Psoas muscle (tissue), 8 donors: ENCODE measurements at regions of chr6 and their contacts with region 1.

Region 1: DNA sequence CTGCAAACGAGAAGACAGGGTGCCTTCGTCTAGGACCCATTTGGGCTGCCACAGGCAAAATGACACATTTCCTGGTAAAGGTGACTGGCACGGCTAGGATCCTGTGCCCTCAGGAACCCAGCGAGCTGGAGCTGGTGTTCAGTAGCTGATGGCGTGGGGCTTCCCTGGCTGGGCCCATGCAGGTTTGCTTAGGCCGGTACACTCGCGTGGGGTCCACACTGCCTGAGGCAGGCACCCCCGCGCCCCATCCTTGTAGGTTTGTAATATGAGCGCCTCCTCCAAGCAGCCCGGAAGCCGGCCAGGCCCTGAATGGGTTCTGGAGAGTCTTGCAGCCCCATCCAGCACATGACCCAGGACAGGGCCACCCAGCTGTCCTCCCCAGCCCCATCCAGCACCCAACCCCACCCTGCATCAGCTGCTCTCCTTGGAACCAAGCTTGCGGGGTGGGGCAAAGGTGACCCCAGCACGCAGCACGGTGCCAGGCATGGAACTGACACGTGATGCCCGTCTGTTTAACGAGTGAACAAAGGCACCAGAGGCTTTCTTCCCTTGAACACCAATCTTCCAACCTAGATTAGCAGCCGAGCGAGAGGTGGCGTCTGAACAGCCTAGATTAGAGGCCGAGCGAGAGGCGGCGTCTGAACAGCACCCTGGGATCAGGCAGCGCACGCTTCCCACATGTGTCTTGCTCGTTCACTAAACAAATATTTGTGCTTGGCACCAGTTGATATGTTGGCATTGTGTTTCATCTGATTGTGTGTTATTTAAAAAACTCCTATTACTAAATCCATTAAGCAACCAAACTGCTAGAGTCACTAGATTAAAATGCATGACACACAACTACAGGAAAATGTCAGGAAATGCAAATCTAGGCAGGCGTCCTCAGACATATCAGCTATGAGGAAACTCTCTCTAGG is 112.1 kb downstream of the DLL1 start:
- DNase-seq: peak; percentile 49 to 80
- ATAC-seq: peak; percentile 66 to 84 (median 80)
- H3K4me3 ChIP-seq: no peak overlapping the region
- H3K27ac ChIP-seq: peak overlapping the region; percentile 42
- H3K4me1 ChIP-seq: peaks cover 26% of the 10 kb centered on the region
- H3K27me3 ChIP-seq: no peaks in the 10 kb centered on the region
- CTCF ChIP-seq: no peak

Region 2: DNA sequence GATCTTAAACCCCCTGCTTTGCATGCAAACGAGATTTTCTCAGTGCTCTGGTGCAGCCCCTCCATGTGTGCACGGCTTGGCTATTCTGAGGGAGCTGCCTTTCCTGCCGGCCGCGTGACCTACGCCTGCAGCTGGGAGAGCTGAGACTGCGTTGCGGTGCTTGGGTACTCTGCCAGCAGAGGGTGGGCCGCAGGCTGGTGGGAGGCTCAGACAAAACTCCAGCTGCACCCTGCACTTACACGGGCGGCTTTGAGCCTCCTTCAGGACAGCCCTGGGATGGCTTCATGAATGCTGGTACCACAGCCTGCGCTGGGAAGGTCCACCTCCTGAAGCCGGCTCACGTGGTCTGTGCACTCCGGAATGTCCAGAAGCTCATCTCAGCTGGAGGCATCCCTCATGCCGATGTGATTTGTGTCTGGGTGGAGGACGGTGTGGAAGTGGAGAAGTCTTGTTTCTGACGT is 111.6 kb before region 1 on chr6:
- intact Hi-C with region 1: no loop called
- DNase-seq: peak in 1 of 2 donors; percentile 47
- ATAC-seq: no peak
- H3K4me3 ChIP-seq: no peak overlapping the region
- H3K27ac ChIP-seq: no peak overlapping the region
- H3K4me1 ChIP-seq: no peaks in the 10 kb centered on the region
- H3K27me3 ChIP-seq: peaks cover 0 to 4% (median 0%) of the 10 kb centered on the region in 3 donors
- CTCF ChIP-seq: no peak

Region 3: DNA sequence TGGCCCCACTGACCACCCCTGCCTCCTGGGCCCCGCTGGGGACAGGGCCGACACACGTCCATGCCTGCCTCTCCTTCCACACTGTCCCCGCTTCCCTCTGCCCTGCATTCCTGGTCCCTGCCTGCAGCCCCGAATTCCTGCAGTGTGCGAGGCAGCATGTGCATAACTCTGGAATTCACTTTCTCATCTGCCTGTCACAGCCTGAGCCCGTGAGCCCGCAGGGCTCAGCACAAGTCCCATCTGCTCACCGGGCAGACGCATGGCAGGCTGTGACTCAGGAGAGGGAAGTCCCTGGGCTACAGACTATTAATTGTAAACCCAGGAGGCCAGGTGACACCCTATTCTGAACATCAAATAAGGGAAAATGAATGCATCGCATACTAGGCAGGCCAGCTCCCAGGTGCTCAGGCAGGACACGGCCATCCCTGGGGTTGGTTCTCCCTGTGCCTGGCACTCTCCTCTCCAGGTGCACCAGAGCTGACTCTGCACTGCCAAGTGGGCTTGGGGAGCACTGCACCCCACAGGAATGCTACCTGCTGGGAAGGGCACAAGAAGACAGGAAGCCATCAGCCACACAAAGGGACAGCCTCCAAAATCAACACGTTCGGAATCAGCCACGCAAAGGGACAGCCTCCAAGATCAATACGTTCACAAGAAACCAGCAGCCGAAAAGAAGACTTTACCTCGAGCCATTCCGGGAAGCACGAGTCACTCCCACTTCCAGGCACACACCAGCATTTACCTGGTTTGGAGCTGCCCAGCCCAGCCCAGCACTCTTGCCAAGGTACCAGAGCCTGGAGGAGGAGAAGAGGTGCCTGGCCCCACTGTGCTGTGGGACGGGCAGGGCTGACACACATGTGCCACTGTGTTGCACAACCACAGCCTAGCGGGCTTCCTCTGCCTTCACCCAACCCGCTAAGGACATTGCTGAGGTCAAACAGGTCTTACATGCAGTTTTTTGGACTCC is 46.2 kb after region 1 on chr6:
- intact Hi-C with region 1: loop called in 1 of 2 experiments (anchors 5 kb)
- DNase-seq: no peak
- ATAC-seq: peak; percentile 50 to 65 (median 62)
- H3K4me3 ChIP-seq: no peak overlapping the region
- H3K27ac ChIP-seq: peak overlapping the region; percentile 53
- H3K4me1 ChIP-seq: peaks cover 27% of the 10 kb centered on the region
- H3K27me3 ChIP-seq: no peaks in the 10 kb centered on the region
- CTCF ChIP-seq: no peak